GM12878 (cell line): ENCODE measurements at regions of chr4 and their contacts with region 1.

Region 1: GRCh38 chr4:112327965-112328733 is 31.0 kb downstream of the ALPK1 start:
- DNase-seq: peak; percentile 73
- ATAC-seq: peak; percentile 92
- H3K4me3 ChIP-seq: no peak overlapping the region
- H3K27ac ChIP-seq: no peak overlapping the region
- H3K4me1 ChIP-seq: peaks cover 4% of the 10 kb centered on the region
- H3K27me3 ChIP-seq: no peaks in the 10 kb centered on the region
- CTCF ChIP-seq: peak; percentile 51 to 78 (median 52); a peak in 5 of 6 replicates
- EP300 ChIP-seq: 0 out of 4 replicates have a peak, but pooled peaks of 1 of the 2 experiments have one; percentile 17
- POLR2A ChIP-seq: no peak
- RAD21 ChIP-seq: peak; percentile 90

Region 2: GRCh38 chr4:112225157-112225556 is 103.0 kb before region 1 on chr4:
- CTCF ChIA-PET with region 1: no interaction called
- POLR2A ChIA-PET with region 1: no interaction called
- RAD21 ChIA-PET with region 1: no interaction called
- SMC1A ChIA-PET with region 1: no interaction called
- in situ Hi-C with region 1: no loop called
- intact Hi-C with region 1: no loop called
- DNase-seq: no peak
- ATAC-seq: no peak; the same call in 1 of the 3 replicates
- H3K4me3 ChIP-seq: no peak overlapping the region
- H3K27ac ChIP-seq: no peak overlapping the region
- H3K4me1 ChIP-seq: no peaks in the 10 kb centered on the region
- H3K27me3 ChIP-seq: no peaks in the 10 kb centered on the region
- CTCF ChIP-seq: no peak
- EP300 ChIP-seq: no peak
- POLR2A ChIP-seq: no peak
- RAD21 ChIP-seq: no peak

Region 3: DNA sequence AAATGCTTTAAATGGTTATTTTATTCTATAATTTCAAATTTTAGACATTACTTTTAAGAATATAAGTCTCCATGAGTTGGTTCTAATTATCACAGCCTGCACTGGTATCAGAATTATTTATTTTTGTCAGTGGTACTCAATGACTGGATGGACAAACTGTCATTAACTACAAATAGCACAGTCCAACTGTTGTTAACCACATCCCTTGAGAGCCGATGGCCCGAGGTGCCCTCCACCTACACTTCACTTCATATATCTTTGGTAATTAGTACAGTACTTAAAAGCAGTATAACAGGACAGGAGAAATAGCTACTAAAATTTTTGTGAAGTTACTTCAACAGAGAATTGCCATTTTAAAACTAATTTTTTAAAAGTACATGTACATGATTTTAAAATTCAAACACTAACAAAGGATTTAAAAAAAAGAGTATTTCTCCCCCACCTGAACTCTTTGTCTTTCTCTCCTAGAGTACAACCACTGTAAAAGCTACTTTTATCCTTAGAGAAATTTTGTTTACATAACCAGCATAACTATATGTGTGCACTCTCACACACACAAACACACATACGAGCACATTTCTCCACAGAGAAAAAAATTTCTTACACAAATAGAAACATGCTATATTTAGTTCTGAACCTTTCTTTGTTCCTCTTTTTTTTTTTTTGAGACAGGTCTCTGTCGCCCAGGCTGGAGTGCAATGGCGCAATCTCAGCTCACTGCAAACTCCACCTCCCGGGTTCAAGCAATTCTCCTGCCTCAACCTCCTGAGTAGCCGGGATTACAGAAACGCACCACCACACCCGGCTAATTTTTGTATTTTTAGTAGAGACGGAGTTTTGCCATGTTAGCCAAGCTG is 48.9 kb before region 1 on chr4:
- CTCF ChIA-PET with region 1: interaction called, 15 read pairs
- POLR2A ChIA-PET with region 1: no interaction called
- RAD21 ChIA-PET with region 1: interaction called, 4 read pairs
- SMC1A ChIA-PET with region 1: interaction called, 247 read pairs
- in situ Hi-C with region 1: loop called (anchors 5 kb)
- intact Hi-C with region 1: no loop called
- DNase-seq: no peak
- ATAC-seq: peak; percentile 65
- H3K4me3 ChIP-seq: peak overlapping the region; percentile 80
- H3K27ac ChIP-seq: peak overlapping the region; percentile 99
- H3K4me1 ChIP-seq: peaks cover 33% of the 10 kb centered on the region
- H3K27me3 ChIP-seq: no peaks in the 10 kb centered on the region
- CTCF ChIP-seq: no peak
- EP300 ChIP-seq: peak; percentile 46 to 49; a peak in 2 of 4 replicates
- POLR2A ChIP-seq: no peak
- RAD21 ChIP-seq: no peak

Region 4: DNA sequence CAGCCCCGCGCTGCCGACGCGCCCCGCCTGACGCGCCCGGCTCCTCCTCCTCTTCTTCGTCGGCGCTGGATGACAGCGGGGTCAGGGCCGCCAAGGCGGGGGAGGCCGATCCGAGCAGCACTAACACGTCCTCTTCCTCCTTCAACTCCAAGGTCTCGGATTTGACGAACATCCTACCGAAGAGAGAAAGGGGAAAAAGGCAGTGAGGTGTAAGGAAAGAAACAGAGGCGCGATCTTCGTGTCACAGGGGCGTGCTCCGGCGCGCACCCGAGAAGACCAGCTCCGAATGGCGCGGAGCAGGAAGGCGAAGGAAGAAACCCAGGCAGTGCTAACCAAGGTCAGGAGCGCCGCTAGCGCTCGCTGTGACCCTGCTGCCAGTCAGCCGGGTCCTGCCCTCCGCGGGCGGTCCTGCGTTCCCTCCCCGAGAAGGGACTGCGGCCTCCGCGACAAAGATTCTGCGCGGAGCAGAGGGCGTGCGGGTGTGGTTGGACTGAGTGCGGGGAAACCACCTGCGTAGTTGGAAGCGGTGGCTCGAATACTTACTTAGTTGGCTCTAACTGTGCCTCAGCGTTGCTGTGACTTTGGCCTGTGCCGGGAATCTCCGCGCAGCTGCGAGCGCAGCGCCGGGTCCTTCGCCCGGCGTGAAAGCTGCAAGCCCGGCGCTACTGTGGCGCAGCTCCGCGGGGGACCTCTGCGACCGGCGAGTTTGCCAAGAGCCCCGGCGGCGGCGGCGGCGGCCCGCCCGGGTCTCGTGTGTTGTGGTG is 187.3 kb after region 1 on chr4:
- CTCF ChIA-PET with region 1: interaction called, 221 read pairs
- POLR2A ChIA-PET with region 1: interaction called, 7 read pairs
- RAD21 ChIA-PET with region 1: interaction called, 24 read pairs
- SMC1A ChIA-PET with region 1: interaction called, 124 read pairs
- in situ Hi-C with region 1: loop called (anchors 5 kb)
- intact Hi-C with region 1: no loop called
- DNase-seq: no peak
- ATAC-seq: peak; percentile 65
- H3K4me3 ChIP-seq: peak overlapping the region; percentile 80
- H3K27ac ChIP-seq: peak overlapping the region; percentile 57
- H3K4me1 ChIP-seq: peaks cover 4% of the 10 kb centered on the region
- H3K27me3 ChIP-seq: peaks cover 5 to 14% of the 10 kb centered on the region in 2 experiments
- CTCF ChIP-seq: no peak
- EP300 ChIP-seq: no peak
- POLR2A ChIP-seq: peak; percentile 68
- RAD21 ChIP-seq: no peak

Region 5: DNA sequence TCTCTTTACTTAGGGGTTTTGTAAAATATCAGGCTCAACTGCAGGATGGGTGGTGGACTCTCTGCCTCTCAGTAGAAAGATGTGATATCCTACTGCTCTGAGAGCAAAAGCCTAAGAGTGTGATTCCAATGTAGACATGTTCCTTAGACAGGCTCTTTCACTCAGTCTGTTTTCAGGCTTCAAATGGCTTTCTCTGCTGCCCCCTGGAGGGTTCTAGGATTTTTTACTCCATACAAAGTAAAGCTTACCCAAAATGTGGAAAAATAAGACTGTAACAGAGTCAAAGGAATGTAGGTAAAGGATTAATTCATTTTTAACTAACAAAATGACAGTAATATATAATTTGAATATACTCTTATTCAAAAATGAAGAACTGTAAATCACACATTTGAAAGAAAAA is 276.4 kb after region 1 on chr4:
- CTCF ChIA-PET with region 1: interaction called, 54 read pairs
- POLR2A ChIA-PET with region 1: no interaction called
- RAD21 ChIA-PET with region 1: interaction called, 8 read pairs
- SMC1A ChIA-PET with region 1: interaction called, 19 read pairs
- in situ Hi-C with region 1: loop called (anchors 5 kb)
- intact Hi-C with region 1: loop called (anchors 1 kb)
- DNase-seq: peak; percentile 3
- ATAC-seq: peak; percentile 92
- H3K4me3 ChIP-seq: no peak overlapping the region
- H3K27ac ChIP-seq: no peak overlapping the region
- H3K4me1 ChIP-seq: no peaks in the 10 kb centered on the region
- H3K27me3 ChIP-seq: no peaks in the 10 kb centered on the region
- CTCF ChIP-seq: peak; percentile 56 to 73 (median 65)
- EP300 ChIP-seq: no peak
- POLR2A ChIP-seq: no peak
- RAD21 ChIP-seq: peak; percentile 79

Region 6: DNA sequence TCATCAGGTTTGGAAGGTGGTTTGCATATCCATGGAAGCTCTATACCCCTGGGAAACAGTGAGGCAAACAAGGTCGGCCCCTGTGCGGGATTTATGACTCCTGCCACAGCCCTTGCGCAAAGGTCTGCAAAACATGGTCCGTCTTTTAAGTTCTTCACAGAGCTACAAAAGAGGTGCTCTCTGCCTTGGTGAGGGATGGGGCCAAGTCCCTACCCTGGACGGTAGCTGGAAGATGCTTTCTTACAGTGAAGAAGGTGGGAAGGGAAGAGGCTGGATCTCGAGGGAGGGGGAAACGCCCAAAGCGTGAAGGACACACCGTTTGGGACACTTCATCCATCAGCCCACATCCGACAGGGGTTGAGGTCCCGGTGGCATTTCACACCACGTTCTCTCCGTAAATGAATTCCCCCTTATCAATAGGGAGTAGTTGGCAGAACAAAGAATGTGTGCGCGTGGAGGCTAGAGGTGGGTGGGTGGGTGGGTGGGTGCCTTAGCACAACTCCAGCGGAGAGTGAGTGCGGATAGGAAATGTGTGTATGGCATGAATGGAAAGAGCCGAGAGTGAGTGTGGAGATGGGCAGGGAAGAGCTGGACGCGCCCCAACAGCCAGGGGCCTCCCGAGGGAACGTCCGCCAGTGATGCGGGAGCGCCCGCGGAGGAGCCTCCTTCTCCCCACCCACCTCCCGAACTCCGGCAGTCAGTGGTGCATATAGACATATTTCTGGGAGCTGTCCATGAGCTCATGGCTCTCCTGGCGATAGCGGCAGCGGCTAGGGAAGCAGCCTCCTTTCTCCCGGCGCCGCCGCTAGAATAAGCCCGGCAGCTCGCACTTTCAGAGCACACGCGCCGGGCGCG is 377.1 kb after region 1 on chr4:
- CTCF ChIA-PET with region 1: no interaction called
- POLR2A ChIA-PET with region 1: no interaction called
- RAD21 ChIA-PET with region 1: no interaction called
- SMC1A ChIA-PET with region 1: no interaction called
- in situ Hi-C with region 1: no loop called
- intact Hi-C with region 1: no loop called
- DNase-seq: no peak
- ATAC-seq: peak; percentile 7; the same call in 2 of the 3 replicates
- H3K4me3 ChIP-seq: no peak overlapping the region; the same call in 1 of the 2 replicates
- H3K27ac ChIP-seq: no peak overlapping the region
- H3K4me1 ChIP-seq: no peaks in the 10 kb centered on the region
- H3K27me3 ChIP-seq: peaks cover 7 to 12% of the 10 kb centered on the region in 2 experiments; a peak in 3 of 4 replicates
- CTCF ChIP-seq: no peak
- EP300 ChIP-seq: no peak
- POLR2A ChIP-seq: no peak
- RAD21 ChIP-seq: no peak